Psoas muscle (tissue), 8 donors: ENCODE measurements at regions of chr10 and their contacts with region 1.

Region 1: DNA sequence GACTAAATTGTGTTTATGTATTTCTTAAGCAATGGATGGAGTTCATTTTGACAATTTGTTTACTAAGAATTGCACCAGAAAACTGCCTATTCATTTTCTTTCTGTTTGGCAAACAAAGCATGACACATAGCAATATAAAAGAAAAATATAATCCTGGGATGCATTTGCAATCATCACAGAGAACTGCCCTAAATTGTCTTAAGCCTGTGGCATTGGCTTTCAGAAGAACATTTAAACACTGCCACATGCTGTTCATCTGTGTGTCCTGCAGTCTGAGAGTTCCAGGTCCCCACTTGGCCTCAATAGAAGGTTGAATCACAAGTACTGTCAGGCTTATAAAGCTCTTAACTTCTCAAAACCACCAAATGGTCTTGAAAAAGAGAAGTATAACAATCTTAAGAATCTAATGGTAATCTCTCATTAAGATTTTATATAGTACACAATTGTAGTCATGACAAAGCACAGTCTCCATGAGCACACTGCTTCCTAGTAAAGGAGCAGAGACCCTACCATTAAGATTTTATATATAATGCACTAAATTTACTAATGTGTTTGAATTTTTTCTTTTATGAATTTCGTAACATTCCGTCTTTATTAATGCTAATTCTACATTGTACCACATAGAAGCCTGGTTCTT is 29.9 kb downstream of the RNLS start:
- DNase-seq: peak in 1 of 2 donors; percentile 17
- ATAC-seq: peak; percentile 86 to 99 (median 93)
- H3K4me3 ChIP-seq: no peak overlapping the region
- H3K27ac ChIP-seq: no peak overlapping the region
- H3K4me1 ChIP-seq: no peaks in the 10 kb centered on the region
- H3K27me3 ChIP-seq: no peaks in the 10 kb centered on the region
- CTCF ChIP-seq: peak; percentile 80

Region 2: DNA sequence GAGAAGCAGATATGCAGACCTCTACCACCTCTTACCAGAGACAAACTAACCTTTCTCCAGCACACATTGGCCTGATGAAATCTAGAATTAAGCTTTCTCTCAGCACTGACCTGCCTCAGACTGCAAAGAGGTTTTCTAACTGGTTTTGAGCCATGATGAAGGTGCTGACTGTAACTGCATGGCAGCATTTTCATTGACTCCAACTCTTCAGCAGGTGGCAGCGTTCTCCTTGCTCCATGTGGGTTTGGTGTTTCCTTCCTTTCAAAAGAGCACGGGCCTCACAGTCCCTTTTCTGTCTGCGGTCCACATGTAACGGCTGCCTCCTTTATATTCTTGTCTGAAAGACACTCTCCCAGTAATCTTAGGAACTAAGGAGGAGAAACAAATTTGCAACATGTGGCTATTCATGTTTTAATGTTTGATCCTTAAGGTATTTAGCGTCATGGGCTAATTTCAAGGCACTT is 702.5 kb before region 1 on chr10:
- intact Hi-C with region 1: loop called (anchors 2 to 5 kb)
- DNase-seq: peak; percentile 37 to 65
- ATAC-seq: peak; percentile 88 to 99 (median 94)
- H3K4me3 ChIP-seq: no peak overlapping the region
- H3K27ac ChIP-seq: no peak overlapping the region
- H3K4me1 ChIP-seq: peaks cover 3% of the 10 kb centered on the region
- H3K27me3 ChIP-seq: no peaks in the 10 kb centered on the region
- CTCF ChIP-seq: peak; percentile 75

Region 3: GRCh38 chr10:88401671-88402347 is 151.4 kb before region 1 on chr10:
- intact Hi-C with region 1: loop called (anchors 5 to 10 kb)
- DNase-seq: no peak
- ATAC-seq: peak in 2 of 4 donors; percentile 65 to 73
- H3K4me3 ChIP-seq: no peak overlapping the region
- H3K27ac ChIP-seq: no peak overlapping the region
- H3K4me1 ChIP-seq: peaks cover 5% of the 10 kb centered on the region
- H3K27me3 ChIP-seq: no peaks in the 10 kb centered on the region
- CTCF ChIP-seq: peak; percentile 7

Region 4: GRCh38 chr10:88409236-88409635 is 144.0 kb before region 1 on chr10:
- intact Hi-C with region 1: loop called (anchors 5 to 10 kb)
- DNase-seq: no peak
- ATAC-seq: no peak
- H3K4me3 ChIP-seq: no peak overlapping the region
- H3K27ac ChIP-seq: no peak overlapping the region
- H3K4me1 ChIP-seq: peaks cover 6% of the 10 kb centered on the region
- H3K27me3 ChIP-seq: no peaks in the 10 kb centered on the region
- CTCF ChIP-seq: no peak

Region 5: GRCh38 chr10:88493691-88494483 is 59.3 kb before region 1 on chr10:
- intact Hi-C with region 1: no loop called
- DNase-seq: no peak
- ATAC-seq: no peak
- H3K4me3 ChIP-seq: no peak overlapping the region
- H3K27ac ChIP-seq: no peak overlapping the region
- H3K4me1 ChIP-seq: no peaks in the 10 kb centered on the region
- H3K27me3 ChIP-seq: no peaks in the 10 kb centered on the region
- CTCF ChIP-seq: no peak